Activated naive CD4-positive, alpha-beta T cell treated with anti-CD3 and anti-CD28 coated beads for 36 hours (primary cell): ENCODE measurements at regions of chr7 and their contacts with region 1.

Region 1: DNA sequence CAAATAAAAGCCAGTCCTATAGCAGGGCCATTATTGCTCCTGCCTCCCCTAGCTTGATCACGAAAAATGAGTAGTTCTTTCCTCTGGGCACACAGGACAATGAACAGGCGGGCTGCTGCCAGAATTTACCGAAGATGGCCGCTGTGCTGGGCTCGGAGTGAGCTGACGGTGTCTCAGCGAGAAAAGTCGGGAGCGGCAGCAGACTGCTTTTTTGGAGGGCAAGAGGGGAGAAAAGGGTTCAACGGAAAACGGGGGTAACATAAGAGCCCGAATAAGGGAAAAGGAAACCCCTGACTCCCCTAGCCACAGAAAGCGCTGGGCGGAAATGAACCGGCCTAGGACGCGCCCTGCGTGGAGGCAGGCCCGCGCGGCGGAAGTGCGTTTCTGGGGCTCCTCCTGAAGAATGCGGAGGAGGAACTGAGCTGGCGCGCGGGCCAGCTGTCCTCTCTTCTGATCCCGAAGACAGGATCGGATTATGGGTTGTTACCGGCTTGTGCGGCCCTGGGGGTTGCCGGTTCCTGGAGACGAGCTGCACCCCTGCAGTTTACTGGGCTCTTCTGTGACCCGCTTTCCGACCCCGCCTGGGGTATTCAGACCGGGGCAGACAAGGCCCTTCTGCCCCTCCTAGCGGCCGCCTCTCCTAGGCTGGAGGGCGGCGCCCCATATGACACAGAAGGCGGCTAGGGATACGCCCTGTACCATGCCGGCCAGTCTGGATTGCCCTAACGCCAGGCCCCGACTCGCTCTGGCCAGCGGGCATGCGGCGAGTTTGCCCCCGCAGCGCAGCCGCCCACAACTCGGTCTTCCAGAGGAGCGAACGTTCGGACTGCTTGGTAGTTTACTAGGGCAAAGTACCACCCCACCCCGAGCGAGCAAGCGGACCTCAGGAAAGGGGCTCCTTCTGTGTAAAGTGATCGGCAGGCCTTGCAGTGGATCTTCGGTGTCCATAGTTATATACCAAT is 30.1 kb upstream of the KMT2E start:
- DNase-seq: peak; percentile 89
- H3K4me3 Mint-ChIP-seq: peak overlapping the region; percentile 98
- H3K27ac Mint-ChIP-seq: peak overlapping the region; percentile 100
- H3K4me1 Mint-ChIP-seq: peaks cover 65% of the 10 kb centered on the region
- H3K27me3 Mint-ChIP-seq: no peaks in the 10 kb centered on the region

Region 2: GRCh38 chr7:104971290-104972071 is 12.4 kb before region 1 on chr7:
- CTCF ChIA-PET with region 1: interaction called, 24 read pairs
- intact Hi-C with region 1: no loop called
- DNase-seq: no peak
- H3K4me3 Mint-ChIP-seq: no peak overlapping the region
- H3K27ac Mint-ChIP-seq: no peak overlapping the region
- H3K4me1 Mint-ChIP-seq: peaks cover 10% of the 10 kb centered on the region
- H3K27me3 Mint-ChIP-seq: no peaks in the 10 kb centered on the region

Region 3: DNA sequence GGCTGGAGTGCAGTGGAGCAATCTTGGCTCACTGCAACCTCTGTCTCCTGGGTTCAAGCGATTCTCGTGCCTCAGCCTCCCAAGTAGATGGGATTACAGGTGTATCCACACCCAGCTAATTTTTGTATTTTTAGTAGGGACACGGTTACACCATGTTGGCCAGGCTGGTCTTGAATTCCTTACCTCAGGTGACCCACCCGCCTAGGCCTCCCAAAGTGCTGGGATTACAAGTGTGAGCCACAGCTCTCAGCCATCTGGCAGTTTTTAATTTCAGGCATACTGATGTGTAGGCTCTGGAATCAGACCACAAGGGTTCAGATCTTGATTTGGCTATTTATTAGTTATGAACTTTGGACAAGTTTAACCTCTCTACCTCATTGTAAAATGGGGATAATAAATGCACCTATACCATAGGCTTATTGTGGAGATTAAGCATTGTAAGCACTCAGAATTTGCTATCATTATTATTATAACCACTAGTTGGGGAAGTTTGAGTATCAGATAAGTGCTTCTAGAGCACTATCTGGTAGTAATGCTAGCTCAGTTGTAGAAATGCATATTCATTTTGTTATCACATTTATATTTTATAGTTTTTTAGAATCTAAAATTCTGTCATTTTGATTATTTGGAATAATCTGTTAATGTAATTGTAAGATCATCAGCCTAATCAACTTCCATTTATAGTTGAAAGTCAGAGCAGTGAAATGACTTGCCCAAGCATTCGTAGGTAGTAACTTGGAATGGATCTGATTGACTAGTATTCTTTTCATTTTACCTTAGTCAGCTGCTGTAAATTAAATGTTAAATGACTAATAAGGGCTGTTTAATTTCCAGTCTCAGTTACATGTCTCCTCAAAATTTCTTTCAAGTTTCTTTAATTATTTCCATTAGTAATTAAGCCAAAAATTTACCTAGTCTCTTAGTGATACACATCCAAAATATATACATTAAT is 52.6 kb after region 1 on chr7:
- CTCF ChIA-PET with region 1: interaction called, 10 read pairs
- intact Hi-C with region 1: loop called (anchors 1 kb)
- DNase-seq: no peak
- H3K4me3 Mint-ChIP-seq: no peak overlapping the region
- H3K27ac Mint-ChIP-seq: no peak overlapping the region
- H3K4me1 Mint-ChIP-seq: peaks cover 54% of the 10 kb centered on the region
- H3K27me3 Mint-ChIP-seq: no peaks in the 10 kb centered on the region

Region 4: GRCh38 chr7:105268511-105269392 is 284.9 kb after region 1 on chr7:
- CTCF ChIA-PET with region 1: interaction called, 3 read pairs
- intact Hi-C with region 1: loop called (anchors 1 kb)
- DNase-seq: peak; percentile 14
- H3K4me3 Mint-ChIP-seq: peak overlapping the region; percentile 72
- H3K27ac Mint-ChIP-seq: peak overlapping the region; percentile 90
- H3K4me1 Mint-ChIP-seq: peaks cover 53% of the 10 kb centered on the region
- H3K27me3 Mint-ChIP-seq: no peaks in the 10 kb centered on the region

Region 5: GRCh38 chr7:105278973-105279687 is 295.3 kb after region 1 on chr7:
- CTCF ChIA-PET with region 1: no interaction called
- intact Hi-C with region 1: no loop called
- DNase-seq: no peak
- H3K4me3 Mint-ChIP-seq: no peak overlapping the region
- H3K27ac Mint-ChIP-seq: no peak overlapping the region
- H3K4me1 Mint-ChIP-seq: peaks cover 28% of the 10 kb centered on the region
- H3K27me3 Mint-ChIP-seq: no peaks in the 10 kb centered on the region

Region 6: DNA sequence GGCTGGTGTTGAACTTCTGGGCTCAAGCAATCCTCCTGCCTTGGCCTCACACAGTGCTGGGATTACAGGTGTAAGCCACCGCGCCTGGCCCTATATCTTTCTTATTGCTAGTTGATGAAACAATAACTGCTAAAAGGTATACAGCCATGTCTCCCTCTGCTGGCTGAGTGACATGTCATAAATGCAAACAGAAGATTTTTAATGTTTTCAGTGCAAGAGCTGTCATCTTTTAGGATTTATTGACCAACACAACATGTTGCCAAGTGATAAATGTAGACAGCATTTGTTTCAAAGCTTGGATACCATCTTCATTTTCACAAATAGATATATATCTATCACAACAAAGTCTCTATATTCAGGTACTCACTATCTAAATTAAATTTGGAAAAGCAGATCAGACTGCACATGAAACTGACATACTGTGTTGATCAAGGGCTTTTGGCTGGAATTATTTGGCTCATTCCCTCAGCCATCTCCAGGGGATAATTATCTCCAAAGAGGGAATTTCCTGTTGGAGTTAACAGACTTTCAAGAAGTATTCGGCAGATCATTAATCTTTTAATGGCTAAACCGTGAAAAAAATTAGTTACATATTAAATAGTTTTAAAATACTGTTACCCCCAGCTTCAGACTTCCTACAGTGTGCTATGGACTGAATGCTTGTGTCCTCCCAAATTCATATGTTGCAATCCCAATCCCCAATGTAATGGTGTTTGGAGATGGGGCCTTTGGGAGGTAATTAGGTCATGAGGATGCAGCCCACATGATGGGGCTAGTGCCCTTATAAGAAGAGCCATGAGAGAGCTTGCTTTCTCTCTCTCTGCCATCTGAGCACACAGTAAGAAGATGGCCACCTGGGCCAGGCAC is 446.1 kb after region 1 on chr7:
- CTCF ChIA-PET with region 1: interaction called, 14 read pairs
- intact Hi-C with region 1: loop called (anchors 1 kb)
- DNase-seq: peak; percentile 80
- H3K4me3 Mint-ChIP-seq: no peak overlapping the region
- H3K27ac Mint-ChIP-seq: no peak overlapping the region
- H3K4me1 Mint-ChIP-seq: peaks cover 15% of the 10 kb centered on the region
- H3K27me3 Mint-ChIP-seq: no peaks in the 10 kb centered on the region

Region 7: DNA sequence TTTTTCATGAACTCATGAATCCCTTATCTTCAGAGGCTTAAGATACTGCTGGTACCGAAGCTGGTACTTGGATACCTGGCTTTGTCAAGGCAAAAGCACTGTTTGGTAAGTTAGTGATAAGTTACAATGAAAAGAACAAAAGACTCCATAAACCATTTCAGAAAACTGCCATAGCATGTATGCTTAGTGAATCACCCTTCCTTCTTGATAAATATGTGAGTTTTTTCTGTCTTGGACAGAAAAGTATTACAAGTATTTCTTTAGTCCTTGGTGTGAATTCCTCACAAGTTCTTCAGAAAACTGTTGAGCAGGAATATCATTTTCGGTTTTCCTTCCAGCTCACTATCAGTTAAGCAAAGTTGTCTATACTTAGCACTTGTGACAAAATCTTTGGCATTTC is 512.7 kb after region 1 on chr7:
- CTCF ChIA-PET with region 1: no interaction called
- intact Hi-C with region 1: no loop called
- DNase-seq: no peak
- H3K4me3 Mint-ChIP-seq: no peak overlapping the region
- H3K27ac Mint-ChIP-seq: no peak overlapping the region
- H3K4me1 Mint-ChIP-seq: no peaks in the 10 kb centered on the region
- H3K27me3 Mint-ChIP-seq: no peaks in the 10 kb centered on the region

Region 8: DNA sequence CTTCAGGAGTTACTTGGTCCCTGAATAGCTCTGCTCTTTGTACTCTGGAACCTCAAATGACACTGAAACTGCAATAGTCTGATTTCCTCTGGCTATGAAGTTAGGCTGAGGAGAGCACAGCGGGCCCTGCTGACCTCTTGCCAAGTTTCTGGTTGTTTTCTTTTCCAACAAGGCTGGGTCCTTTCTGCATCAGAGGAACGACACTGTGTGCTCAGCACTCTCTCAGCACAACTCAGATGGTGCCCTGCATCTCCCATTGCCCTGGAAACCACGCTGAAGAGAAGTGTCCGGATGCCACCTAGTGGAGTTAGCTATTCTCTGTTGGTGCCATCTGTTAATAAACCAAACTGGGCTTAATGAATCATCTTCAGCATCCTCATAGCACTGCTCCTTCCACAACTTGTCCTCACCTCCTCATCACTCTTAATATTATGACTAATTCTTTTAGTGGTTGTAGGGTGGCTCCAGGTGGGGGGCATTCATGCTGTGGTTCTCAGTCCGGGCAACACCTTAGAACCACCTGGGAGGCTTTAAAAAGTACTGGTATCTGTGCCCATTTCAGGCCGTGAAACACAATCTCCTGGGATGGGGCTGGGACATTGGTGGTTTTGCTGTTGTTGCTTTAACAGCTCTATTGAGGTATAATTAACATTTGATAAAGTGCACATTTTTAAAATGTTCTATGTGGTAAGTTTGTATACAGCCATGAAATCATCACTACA is 605.7 kb after region 1 on chr7:
- CTCF ChIA-PET with region 1: no interaction called
- intact Hi-C with region 1: loop called (anchors 1 kb)
- DNase-seq: peak; percentile 82
- H3K4me3 Mint-ChIP-seq: no peak overlapping the region
- H3K27ac Mint-ChIP-seq: no peak overlapping the region
- H3K4me1 Mint-ChIP-seq: peaks cover 4% of the 10 kb centered on the region
- H3K27me3 Mint-ChIP-seq: no peaks in the 10 kb centered on the region